Heart left ventricle (tissue), 16 donors: ENCODE measurements at regions of chr10 and their contacts with region 1.

Region 1: DNA sequence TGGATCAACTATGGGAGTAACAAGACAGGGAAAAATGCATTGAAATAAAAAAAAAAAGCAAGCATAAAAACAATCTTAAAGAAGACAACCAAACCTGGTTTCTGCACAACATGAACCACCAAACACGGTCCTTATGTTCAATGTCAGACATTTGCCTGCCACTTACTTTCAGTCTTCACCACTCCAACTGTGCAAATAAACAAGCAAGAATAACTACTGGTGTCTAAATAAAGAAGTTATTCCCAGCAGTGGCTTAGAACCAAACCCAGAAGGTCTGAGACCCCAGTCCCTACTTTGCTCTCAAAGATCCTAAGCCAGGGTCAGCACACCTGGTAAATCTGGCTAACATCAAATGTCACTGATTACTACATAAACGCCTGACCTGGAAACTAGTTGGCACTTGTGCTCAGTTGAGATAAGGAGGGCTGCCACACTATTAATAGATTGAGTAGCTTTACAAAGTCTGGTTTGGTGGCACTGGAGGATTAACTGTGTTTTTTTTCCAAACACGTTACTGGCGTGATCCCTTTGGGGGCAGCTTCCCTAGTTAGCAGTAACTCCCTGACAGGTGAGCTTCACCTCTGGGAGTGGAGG is 62.7 kb upstream of the ABLIM1 start:
- DNase-seq: peak in 3 of 5 donors; percentile 32 to 43 (median 39)
- ATAC-seq: peak; percentile 76 to 86 (median 82)
- H3K4me3 ChIP-seq: no peak overlapping the region
- H3K27ac ChIP-seq: peak overlapping the region; percentile 62 to 90 (median 82)
- H3K4me1 ChIP-seq: peaks cover 13 to 86% (median 60%) of the 10 kb centered on the region in 12 donors
- H3K27me3 ChIP-seq: no peaks in the 10 kb centered on the region
- CTCF ChIP-seq: no peak
- POLR2A ChIP-seq: no peak

Region 2: DNA sequence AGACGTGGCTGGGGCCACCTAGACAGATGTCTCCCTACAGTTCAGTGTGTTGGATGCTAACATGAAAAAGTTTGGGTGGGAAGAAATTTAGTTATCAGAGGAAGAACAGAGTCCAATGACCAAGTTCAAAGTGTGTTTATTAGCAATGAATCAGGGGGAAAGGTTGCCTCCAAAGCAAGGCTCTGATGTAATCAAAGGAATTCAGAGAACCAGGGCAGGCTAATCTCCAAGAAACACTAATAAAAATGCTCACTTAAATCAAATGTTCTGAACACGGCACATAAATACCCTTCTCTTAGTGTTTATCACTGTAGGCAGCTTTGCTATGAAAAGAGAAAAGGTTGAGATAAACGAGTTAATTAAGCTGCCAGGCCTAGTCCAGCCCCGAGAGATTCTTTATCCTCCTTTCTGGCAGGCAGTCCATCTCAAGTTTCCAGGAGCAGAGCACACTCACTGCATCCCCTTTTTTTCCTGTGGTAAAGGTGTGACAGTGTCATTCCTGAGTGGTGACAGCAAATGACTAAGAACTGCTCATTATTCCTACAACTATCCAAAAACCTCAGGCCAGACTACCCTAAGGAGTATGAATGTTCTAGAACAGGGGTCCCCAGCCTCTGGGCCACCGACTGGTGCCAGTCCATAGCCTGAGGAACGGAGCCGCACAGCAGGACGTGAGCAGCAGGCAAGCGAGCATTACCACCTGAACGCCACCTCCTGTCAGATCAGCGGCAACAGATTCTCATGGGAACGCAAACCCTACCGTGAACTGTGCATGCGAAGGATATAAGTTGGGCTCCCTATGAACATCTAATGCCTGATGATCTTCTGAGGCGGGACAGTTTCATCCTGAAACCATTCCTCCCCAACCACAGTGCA is 33.9 kb after region 1 on chr10:
- intact Hi-C with region 1: loop called in 3 of 10 experiments (anchors 5 kb)
- DNase-seq: no peak
- ATAC-seq: peak in 3 of 4 donors; percentile 10 to 50 (median 41)
- H3K4me3 ChIP-seq: no peak overlapping the region
- H3K27ac ChIP-seq: peak overlapping the region; percentile 17 to 61 (median 48)
- H3K4me1 ChIP-seq: peaks cover 7 to 92% (median 45%) of the 10 kb centered on the region in 12 donors
- H3K27me3 ChIP-seq: no peaks in the 10 kb centered on the region
- CTCF ChIP-seq: no peak
- POLR2A ChIP-seq: no peak

Region 3: DNA sequence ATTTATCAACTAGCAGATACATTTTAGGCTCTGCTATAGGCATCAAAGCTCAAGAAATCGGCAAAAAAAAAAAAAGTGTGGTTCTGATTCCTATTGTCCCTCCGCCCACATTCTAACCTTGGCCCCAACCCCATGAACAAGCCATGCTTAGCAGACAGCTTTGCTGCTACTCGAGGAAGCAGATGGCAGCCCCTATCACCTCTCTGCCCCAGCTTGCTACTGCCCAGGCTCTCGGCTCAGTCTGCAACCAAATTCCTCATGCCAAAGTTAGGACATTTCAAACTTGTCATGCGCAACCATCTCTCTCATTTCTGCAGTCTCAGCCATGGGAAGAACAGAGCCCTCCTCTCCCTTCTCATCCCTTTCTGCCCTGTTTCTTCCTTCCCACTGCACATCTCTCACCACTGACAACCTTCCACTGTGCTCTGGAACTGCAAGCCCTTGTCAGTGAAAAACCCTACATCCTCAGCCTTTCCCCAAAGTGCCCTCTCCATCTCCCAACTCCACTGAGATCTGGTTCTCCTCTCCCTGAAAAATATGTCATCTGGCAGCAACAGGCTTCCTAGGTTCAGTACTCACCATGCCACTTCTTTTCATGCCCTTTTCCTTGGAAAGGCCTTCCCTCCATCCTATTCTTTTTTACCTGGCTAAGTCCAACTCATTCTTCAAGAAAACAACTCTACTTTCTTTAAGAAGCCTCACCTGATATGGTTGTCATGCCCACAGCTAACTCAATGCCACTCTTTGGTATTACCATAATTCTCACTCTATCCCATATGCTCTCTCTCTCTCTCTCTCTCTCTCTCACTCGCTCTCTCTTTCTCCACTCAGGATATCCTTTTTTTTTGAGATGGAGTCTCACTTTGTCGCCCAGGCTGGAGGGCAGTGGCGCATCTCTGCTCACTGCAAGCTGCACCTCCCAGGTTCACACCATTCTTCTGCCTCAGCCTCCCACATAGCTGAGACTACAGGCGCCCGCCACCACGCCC is 40.7 kb after region 1 on chr10:
- intact Hi-C with region 1: loop called in 8 of 10 experiments (anchors 5 to 10 kb)
- DNase-seq: no peak
- ATAC-seq: peak in 2 of 4 donors; percentile 35 to 43
- H3K4me3 ChIP-seq: no peak overlapping the region
- H3K27ac ChIP-seq: peak overlapping the region in 10 of 12 donors; percentile 5 to 68 (median 40)
- H3K4me1 ChIP-seq: peaks cover 4 to 90% (median 47%) of the 10 kb centered on the region in 12 donors
- H3K27me3 ChIP-seq: peaks cover 0 to 1% (median 0%) of the 10 kb centered on the region in 9 donors
- CTCF ChIP-seq: no peak
- POLR2A ChIP-seq: no peak